ENCODE measurements at regions of chr4 and their contacts with region 1.

Region 1: DNA sequence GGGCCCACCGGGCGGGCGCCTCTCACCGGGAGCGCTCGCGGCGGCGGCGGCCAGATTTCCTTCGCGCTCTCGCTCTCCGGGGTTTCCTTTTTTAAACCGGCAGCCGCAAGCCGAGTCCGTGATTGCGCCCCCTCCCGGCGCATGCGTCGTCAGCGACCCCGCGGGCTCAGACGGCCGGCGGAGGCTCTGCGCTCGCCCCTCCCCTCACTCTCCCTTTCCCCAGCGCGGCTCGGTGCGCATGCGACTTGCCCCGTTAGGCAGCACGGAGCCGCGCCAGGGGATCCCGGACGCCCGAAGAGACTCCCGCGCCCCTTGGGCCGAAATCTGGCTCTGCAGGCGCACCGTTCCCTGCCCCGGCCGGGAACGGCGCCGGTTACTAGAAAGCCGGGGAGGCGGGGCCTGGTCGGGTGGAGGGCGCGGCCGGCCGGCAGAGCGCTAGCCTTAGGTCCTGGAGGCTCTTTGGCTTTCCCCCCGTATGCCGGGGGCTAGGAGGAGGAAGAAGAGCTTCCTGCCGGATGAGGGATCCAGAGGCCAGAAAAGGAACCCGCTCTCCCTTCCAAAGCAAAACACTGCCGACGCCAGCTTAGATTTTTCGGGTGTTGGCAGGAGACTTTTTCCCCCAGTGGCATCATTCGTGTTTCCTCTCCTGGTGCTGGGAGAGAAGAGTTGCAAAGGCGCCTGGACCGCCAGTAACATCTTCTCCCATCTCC is at the start of gene CLOCK:
- DNase-seq: peak; percentile 83
- H3K4me3 Mint-ChIP-seq: peak within 1 kb of the TSS; percentile 84
- H3K27ac Mint-ChIP-seq: peak within 1 kb of the TSS; percentile 89
- H3K4me1 Mint-ChIP-seq: peaks cover 50% of the 10 kb centered on the region
- H3K27me3 Mint-ChIP-seq: no peaks in the 10 kb centered on the region
- total RNA-seq, gene CLOCK: 8.1 to 8.5 TPM

Region 2: DNA sequence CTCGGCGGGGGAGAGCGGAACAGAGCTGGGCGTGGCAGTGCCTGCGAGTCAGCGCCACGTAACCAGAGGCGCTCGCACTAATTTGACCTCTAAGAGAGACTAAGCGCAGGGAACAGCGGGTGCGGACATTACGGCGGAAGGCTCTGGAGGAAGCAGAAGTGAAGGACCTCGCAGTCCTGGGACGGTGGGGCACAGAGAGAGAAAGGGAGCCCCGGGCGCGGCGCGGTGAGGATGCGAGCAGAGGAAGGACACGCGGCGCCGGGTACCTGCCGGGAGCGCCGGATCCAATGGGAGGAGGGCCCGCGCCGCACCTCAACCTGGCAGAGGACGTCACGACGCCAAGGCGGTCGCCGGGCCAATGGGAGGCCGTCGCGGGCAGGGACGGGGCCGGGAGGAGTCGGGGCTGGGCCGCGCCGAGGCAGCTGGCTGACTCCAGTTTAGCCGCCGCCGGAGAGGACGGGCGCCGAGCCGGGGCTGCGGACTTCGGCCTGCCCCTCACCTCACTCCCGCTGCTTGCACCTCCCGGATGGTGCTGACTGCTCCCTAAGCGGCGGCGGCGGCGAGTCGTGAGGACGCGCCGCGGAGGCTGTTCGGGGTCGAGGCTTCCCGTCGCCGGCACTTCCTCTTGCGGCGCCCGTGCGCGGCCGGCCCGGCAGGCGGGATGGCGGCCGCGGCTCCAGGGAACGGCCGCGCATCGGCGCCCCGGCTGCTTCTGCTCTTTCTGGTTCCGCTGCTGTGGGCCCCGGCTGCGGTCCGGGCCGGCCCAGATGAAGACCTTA is 151.2 kb before region 1 on chr4 and contains the start of gene TMEM165:
- CTCF ChIA-PET with region 1: no interaction called
- intact Hi-C with region 1: loop called (anchors 1 kb)
- DNase-seq: peak; percentile 92
- H3K4me3 Mint-ChIP-seq: peak within 1 kb of the TSS; percentile 96
- H3K27ac Mint-ChIP-seq: peak within 1 kb of the TSS; percentile 89
- H3K4me1 Mint-ChIP-seq: peaks cover 39% of the 10 kb centered on the region
- H3K27me3 Mint-ChIP-seq: no peaks in the 10 kb centered on the region
- total RNA-seq, gene TMEM165: 39.1 to 40.6 TPM

Region 3: DNA sequence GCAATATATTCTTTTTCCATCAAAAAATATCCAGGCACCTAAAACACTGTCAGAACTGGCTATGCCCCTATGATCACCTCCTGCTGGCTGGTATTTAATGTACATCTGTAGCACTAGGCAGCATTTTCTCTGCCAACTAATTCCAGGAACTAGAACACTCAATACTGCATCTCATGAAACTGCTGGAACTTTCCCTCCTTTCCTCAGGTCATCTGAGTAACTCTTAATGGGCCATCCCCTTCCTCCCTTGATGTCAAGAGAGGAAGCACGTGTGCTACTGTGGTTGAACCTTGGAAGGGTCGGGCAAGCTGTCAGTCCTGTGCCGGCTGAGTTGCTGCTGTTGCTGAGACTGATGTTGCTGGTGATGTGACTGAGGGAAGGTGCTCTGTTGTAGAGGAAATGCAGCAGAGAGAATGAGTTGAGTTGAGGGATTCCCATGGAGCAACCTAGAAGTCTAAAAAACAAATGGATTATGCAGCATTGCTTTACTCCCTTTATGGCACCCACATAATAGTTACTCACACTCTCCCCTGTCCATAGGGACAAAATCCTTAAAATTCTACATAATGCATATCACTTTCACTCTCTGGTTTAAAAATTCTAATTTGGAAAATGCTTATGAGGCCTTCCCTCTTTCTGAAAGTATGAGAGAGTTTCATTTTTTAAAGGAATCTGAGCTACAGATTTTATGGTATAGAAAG is 111.6 kb before region 1 on chr4:
- CTCF ChIA-PET with region 1: no interaction called
- intact Hi-C with region 1: loop called (anchors 1 kb)
- DNase-seq: peak; percentile 68
- H3K4me3 Mint-ChIP-seq: no peak overlapping the region
- H3K27ac Mint-ChIP-seq: peak overlapping the region; percentile 37
- H3K4me1 Mint-ChIP-seq: peaks cover 16% of the 10 kb centered on the region
- H3K27me3 Mint-ChIP-seq: no peaks in the 10 kb centered on the region

Region 4: DNA sequence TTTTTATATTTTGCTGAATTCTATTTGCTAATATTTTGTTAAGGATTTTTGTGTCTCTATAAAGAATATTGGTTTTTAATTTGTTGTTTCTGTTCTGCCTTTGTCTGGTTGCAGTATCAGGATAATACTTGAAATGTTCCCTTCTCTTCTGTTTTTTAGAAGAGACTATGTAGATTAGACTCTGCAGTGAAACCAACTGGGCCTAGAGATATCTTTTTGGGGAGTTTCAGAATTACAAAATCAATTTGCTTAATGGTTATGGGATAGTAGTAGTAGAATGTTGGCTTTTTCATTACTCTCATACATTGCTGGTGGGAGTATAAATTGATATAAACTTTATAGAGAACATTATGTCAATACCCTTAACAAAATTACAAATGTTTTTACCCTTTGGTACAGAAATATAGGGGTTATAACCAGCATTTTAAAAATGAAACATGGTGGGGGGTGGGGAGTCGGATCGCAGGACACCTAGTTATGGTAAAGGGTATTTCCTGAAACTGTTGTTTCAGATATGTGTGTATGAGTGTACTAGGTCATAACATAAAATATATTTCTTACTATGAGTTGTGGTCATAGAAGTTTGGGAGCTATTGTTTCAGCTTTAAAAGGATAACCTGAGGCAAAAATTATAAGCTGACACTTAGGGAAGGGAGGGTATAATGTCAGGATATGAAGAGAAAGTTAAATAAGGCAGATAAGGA is 29.2 kb before region 1 on chr4:
- CTCF ChIA-PET with region 1: no interaction called
- intact Hi-C with region 1: no loop called
- DNase-seq: no peak
- H3K4me3 Mint-ChIP-seq: no peak overlapping the region
- H3K27ac Mint-ChIP-seq: no peak overlapping the region
- H3K4me1 Mint-ChIP-seq: peaks cover 9% of the 10 kb centered on the region
- H3K27me3 Mint-ChIP-seq: no peaks in the 10 kb centered on the region

Region 5: GRCh38 chr4:55635741-55636655 is 89.1 kb after region 1 on chr4 and contains the start of gene NMU:
- CTCF ChIA-PET with region 1: interaction called, 3 read pairs
- intact Hi-C with region 1: loop called (anchors 5 kb)
- DNase-seq: peak; percentile 58
- H3K4me3 Mint-ChIP-seq: peak within 1 kb of the TSS; percentile 69
- H3K27ac Mint-ChIP-seq: no peak within 1 kb of the TSS
- H3K4me1 Mint-ChIP-seq: peaks cover 15% of the 10 kb centered on the region
- H3K27me3 Mint-ChIP-seq: peaks cover 51% of the 10 kb centered on the region
- total RNA-seq, gene NMU: not detected